ENCODE measurements at regions of chr6 and their contacts with region 1.

Region 1: GRCh38 chr6:52284460-52285176 is at the start of gene MCM3:
- DNase-seq: peak; percentile 96 to 99 (median 99)
- H3K4me3 ChIP-seq: peak within 1 kb of the TSS; percentile 74 to 77
- H3K4me3 Mint-ChIP-seq: peak within 1 kb of the TSS in 5 of 8 donors; percentile 60 to 80 (median 68)
- H3K27ac ChIP-seq: peak within 1 kb of the TSS; percentile 73
- H3K27ac Mint-ChIP-seq: peak within 1 kb of the TSS in 3 of 7 donors; percentile 18 to 89 (median 88)
- H3K4me1 ChIP-seq: peaks cover 47% of the 10 kb centered on the region
- H3K4me1 Mint-ChIP-seq: peaks cover 30 to 57% (median 36%) of the 10 kb centered on the region in 4 donors
- H3K27me3 ChIP-seq: no peaks in the 10 kb centered on the region
- H3K27me3 Mint-ChIP-seq: no peaks in the 10 kb centered on the region
- total RNA-seq, gene MCM3: 48.6 to 54.2 TPM

Region 2: GRCh38 chr6:52263709-52264540 is 20.7 kb before region 1 on chr6:
- CTCF ChIA-PET with region 1: interaction called, 41 read pairs
- POLR2A ChIA-PET with region 1: interaction called, 5 read pairs
- intact Hi-C with region 1: no loop called
- DNase-seq: peak; percentile 63 to 67 (median 64)
- H3K4me3 ChIP-seq: no peak overlapping the region
- H3K4me3 Mint-ChIP-seq: no peak overlapping the region
- H3K27ac ChIP-seq: no peak overlapping the region
- H3K27ac Mint-ChIP-seq: peak overlapping the region in 5 of 7 donors; percentile 15 to 73 (median 33)
- H3K4me1 ChIP-seq: no peaks in the 10 kb centered on the region
- H3K4me1 Mint-ChIP-seq: peaks cover 3 to 11% (median 6%) of the 10 kb centered on the region in 4 donors
- H3K27me3 ChIP-seq: no peaks in the 10 kb centered on the region
- H3K27me3 Mint-ChIP-seq: no peaks in the 10 kb centered on the region

Region 3: GRCh38 chr6:52310932-52311331 is 26.3 kb after region 1 on chr6:
- CTCF ChIA-PET with region 1: interaction called, 62 read pairs
- POLR2A ChIA-PET with region 1: interaction called, 124 read pairs
- intact Hi-C with region 1: no loop called
- DNase-seq: no peak
- H3K4me3 ChIP-seq: no peak overlapping the region
- H3K4me3 Mint-ChIP-seq: peak overlapping the region in 3 of 8 donors; percentile 9 to 36 (median 23)
- H3K27ac ChIP-seq: no peak overlapping the region
- H3K27ac Mint-ChIP-seq: peak overlapping the region in 3 of 7 donors; percentile 32 to 74 (median 50)
- H3K4me1 ChIP-seq: peaks cover 46% of the 10 kb centered on the region
- H3K4me1 Mint-ChIP-seq: peaks cover 35 to 73% (median 49%) of the 10 kb centered on the region in 4 donors
- H3K27me3 ChIP-seq: no peaks in the 10 kb centered on the region
- H3K27me3 Mint-ChIP-seq: no peaks in the 10 kb centered on the region

Region 4: DNA sequence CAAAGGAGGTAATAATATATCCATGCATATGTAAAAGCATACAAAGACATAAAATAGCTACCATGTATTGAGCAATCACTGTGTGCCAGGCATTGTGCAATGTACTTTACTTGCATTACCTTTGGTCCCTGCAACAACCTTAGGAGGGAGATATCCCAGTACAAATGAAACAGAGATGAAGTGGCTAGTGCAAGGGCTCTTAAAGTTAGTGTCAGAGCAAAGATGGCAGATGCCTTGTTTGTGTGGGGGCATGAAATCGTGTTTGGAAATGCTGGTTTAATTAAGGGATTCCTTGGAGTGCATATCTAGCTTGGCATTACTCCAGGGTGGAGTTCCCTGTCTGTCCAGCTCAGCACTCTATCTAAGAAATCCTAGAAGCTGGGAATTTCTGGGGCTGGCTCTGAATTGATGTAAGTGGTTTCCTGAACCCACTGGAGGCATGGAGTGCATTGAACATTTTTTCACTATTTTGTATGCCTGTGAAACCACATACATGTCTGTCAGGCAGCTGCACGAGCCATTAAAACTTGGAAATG is 87.1 kb after region 1 on chr6:
- CTCF ChIA-PET with region 1: interaction called, 14 read pairs
- POLR2A ChIA-PET with region 1: interaction called, 165 read pairs
- intact Hi-C with region 1: no loop called
- DNase-seq: no peak
- H3K4me3 ChIP-seq: no peak overlapping the region
- H3K4me3 Mint-ChIP-seq: no peak overlapping the region
- H3K27ac ChIP-seq: no peak overlapping the region
- H3K27ac Mint-ChIP-seq: peak overlapping the region in 5 of 7 donors; percentile 22 to 78 (median 48)
- H3K4me1 ChIP-seq: peaks cover 77% of the 10 kb centered on the region
- H3K4me1 Mint-ChIP-seq: peaks cover 58 to 91% (median 75%) of the 10 kb centered on the region in 4 donors
- H3K27me3 ChIP-seq: no peaks in the 10 kb centered on the region
- H3K27me3 Mint-ChIP-seq: no peaks in the 10 kb centered on the region

Region 5: DNA sequence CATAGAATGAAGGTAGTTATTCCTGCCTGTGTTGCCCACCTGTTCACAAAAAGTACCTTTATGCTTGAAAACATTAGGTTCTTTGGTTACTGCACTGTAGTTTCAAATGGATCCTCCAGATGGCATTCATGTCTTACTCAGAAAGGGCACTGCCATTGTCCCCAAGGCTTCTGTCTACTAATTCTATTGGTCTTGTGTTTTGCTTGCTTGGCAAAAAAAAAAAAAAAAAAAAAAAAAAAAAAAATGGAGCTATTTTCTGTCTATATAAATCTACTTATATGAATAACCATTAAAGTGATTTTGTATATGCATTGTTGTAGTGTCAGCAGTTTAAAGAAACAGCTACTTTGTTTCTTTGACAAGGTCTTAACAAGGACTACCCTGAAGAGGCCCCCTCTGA is 122.8 kb after region 1 on chr6:
- CTCF ChIA-PET with region 1: interaction called, 287 read pairs
- POLR2A ChIA-PET with region 1: interaction called, 164 read pairs
- intact Hi-C with region 1: no loop called
- DNase-seq: peak in 3 of 5 donors; percentile 35 to 43 (median 37)
- H3K4me3 ChIP-seq: no peak overlapping the region
- H3K4me3 Mint-ChIP-seq: peak overlapping the region in 1 of 8 donors; percentile 13
- H3K27ac ChIP-seq: no peak overlapping the region
- H3K27ac Mint-ChIP-seq: peak overlapping the region in 6 of 7 donors; percentile 18 to 88 (median 62)
- H3K4me1 ChIP-seq: no peaks in the 10 kb centered on the region
- H3K4me1 Mint-ChIP-seq: peaks cover 0 to 22% (median 11%) of the 10 kb centered on the region in 4 donors
- H3K27me3 ChIP-seq: no peaks in the 10 kb centered on the region
- H3K27me3 Mint-ChIP-seq: no peaks in the 10 kb centered on the region

Region 6: GRCh38 chr6:52647199-52647598 is 362.6 kb after region 1 on chr6:
- CTCF ChIA-PET with region 1: interaction called, 25 read pairs
- POLR2A ChIA-PET with region 1: interaction called, 4 read pairs
- intact Hi-C with region 1: no loop called
- DNase-seq: no peak
- H3K4me3 ChIP-seq: no peak overlapping the region
- H3K4me3 Mint-ChIP-seq: no peak overlapping the region
- H3K27ac ChIP-seq: no peak overlapping the region
- H3K27ac Mint-ChIP-seq: no peak overlapping the region
- H3K4me1 ChIP-seq: no peaks in the 10 kb centered on the region
- H3K4me1 Mint-ChIP-seq: peaks cover 3 to 7% (median 4%) of the 10 kb centered on the region in 4 donors
- H3K27me3 ChIP-seq: peaks cover 6% of the 10 kb centered on the region
- H3K27me3 Mint-ChIP-seq: peaks cover 6 to 10% of the 10 kb centered on the region in 2 donors

Region 7: DNA sequence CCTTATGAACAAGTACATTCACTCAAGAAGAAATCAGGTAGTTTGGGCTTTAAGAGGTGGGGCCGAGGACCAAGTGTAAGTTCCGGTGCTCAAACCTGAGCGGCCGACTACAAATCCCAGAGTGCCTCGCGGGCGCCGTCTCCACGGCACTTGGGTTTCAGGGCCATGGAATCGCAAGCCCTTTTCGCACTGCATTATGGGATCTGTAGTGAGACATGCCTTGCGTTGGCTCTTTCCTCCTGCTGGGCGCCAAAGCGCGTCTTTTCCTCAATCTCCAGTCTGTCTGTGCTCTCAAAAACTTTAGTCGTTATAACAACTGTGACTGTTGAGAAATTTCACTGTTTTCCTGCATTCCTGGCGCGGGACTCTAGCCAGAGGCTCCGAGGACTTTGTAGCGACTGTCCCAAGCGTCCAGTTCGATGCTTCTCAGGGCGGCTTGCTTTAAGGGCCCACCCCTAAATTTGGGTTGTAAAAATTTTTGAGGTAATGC is 780.2 kb after region 1 on chr6:
- CTCF ChIA-PET with region 1: interaction called, 3 read pairs
- POLR2A ChIA-PET with region 1: no interaction called
- intact Hi-C with region 1: loop called (anchors 1 kb)
- DNase-seq: peak; percentile 93 to 99 (median 96)
- H3K4me3 ChIP-seq: peak overlapping the region; percentile 74 to 99
- H3K4me3 Mint-ChIP-seq: peak overlapping the region; percentile 98 to 100 (median 99)
- H3K27ac ChIP-seq: peak overlapping the region; percentile 63
- H3K27ac Mint-ChIP-seq: peak overlapping the region; percentile 86 to 99 (median 99)
- H3K4me1 ChIP-seq: peaks cover 52% of the 10 kb centered on the region
- H3K4me1 Mint-ChIP-seq: peaks cover 34 to 73% (median 54%) of the 10 kb centered on the region in 4 donors
- H3K27me3 ChIP-seq: no peaks in the 10 kb centered on the region
- H3K27me3 Mint-ChIP-seq: no peaks in the 10 kb centered on the region

Measured in CD4-positive, alpha-beta memory T cell (primary cell).